SK-N-SH (cell line): ENCODE measurements at regions of chr2 and their contacts with region 1.

Region 1: DNA sequence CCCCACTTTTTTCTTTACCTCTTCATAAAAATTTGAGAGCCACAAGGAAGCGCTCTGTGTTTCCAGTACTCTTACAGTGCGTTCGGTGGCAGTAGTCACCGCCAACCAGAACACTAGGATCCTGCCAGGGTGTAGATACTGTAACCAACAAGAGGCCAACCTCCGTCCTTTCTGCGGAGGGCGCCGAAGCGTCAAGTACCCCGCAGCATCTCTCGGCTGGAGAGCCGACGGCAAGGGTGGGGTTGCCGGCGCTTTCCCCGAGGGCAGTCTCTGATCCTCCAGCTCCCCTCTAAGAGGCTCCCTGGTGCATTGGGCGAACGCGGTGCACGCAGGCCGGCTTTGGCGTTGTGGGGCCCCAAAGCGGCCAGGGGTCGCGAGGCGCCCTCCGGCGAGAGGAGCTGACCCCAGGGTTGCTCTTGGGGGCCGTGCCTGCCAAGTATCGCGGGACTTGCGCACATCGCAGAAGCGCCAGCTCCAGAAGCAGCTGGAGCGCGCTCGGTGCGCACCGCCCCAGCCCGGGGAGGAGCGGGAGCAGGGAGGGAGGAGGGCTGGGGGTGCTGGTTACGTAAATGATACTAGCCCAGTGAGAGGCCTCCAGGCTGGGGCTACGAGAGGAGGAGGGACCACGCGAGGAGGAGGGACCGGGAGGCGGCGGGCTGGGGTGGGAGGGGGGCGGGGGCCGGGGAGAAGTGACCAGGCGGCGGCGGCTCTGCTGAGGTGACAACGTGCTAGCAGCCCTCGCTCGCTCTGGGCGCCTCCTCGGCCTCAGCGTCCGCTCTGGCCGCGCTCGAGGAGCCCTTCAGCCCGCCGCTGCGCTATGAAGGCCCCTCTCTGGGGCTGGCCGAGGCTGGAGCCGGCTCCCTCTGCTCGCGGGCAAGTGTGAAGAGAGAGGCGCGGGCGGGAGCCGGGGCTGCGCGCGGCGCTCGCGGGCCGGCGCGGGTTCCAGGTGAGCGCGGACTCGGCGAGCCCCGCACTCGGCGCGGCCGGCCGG is at the start of gene GALNT13:
- DNase-seq: peak; percentile 92
- H3K4me3 ChIP-seq: peak within 1 kb of the TSS; percentile 12 to 57; a peak in 3 of 4 replicates
- H3K27ac ChIP-seq: peak within 1 kb of the TSS in 1 of 2 experiments; percentile 91; a peak in 2 of 4 replicates
- H3K4me1 ChIP-seq: peaks cover 0 to 6% of the 10 kb centered on the region in 2 experiments; a peak in 2 of 4 replicates
- H3K27me3 ChIP-seq: peaks cover 24% of the 10 kb centered on the region; the same call in 1 of the 2 replicates
- CTCF ChIP-seq: no peak
- EP300 ChIP-seq: 0 out of 4 replicates have a peak, but pooled peaks of 1 of the 2 experiments have one; percentile 3
- RAD21 ChIP-seq: peak; percentile 57
- polyA plus RNA-seq, gene GALNT13: 0.33 and 0.86 TPM in 2 replicates

Region 2: DNA sequence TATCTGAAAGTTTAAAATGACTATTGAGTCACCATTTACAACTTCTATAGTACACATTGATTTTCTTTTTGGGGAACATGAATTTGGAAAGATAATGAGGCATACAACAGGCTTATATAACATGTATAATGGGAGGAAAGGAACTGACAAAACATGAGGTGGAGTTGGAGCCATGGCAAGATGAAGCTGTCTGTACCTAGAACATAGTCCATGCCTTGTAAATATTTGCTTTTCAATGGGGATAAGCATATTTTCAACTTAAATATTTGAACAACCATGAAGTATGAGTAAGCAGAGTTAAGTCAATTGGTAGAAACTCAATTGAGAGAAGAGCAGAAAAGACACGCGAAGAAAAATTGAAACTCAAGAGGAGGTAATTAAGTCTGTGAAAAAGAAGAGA is 36.9 kb before region 1 on chr2:
- CTCF ChIA-PET with region 1: no interaction called
- POLR2A ChIA-PET with region 1: no interaction called
- DNase-seq: no peak
- H3K4me3 ChIP-seq: no peak overlapping the region
- H3K27ac ChIP-seq: no peak overlapping the region
- H3K4me1 ChIP-seq: no peaks in the 10 kb centered on the region
- H3K27me3 ChIP-seq: no peaks in the 10 kb centered on the region
- CTCF ChIP-seq: no peak
- EP300 ChIP-seq: no peak
- RAD21 ChIP-seq: no peak

Region 3: DNA sequence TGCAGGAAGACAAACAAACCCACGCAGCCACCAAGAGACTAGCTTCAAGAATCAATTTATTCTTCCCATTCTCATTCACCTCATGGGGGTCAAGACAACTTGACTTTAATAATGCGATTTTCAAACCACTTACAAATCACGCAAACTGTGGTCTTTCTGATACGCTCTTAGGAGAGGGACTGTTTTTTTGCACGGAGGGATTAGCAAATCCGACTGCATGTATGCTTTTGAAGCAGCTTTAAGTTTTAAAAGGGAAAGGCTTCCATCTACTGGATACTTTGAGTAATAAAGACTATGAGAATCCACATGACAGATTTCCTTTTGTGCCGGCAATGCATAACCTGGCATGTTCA is 504.0 kb after region 1 on chr2:
- CTCF ChIA-PET with region 1: interaction called, 32 read pairs
- POLR2A ChIA-PET with region 1: interaction called, 6 read pairs
- DNase-seq: peak; percentile 29
- H3K4me3 ChIP-seq: no peak overlapping the region
- H3K27ac ChIP-seq: no peak overlapping the region; a peak in 1 of 4 replicates
- H3K4me1 ChIP-seq: no peaks in the 10 kb centered on the region; a peak in 1 of 4 replicates
- H3K27me3 ChIP-seq: no peaks in the 10 kb centered on the region
- CTCF ChIP-seq: peak; percentile 61
- EP300 ChIP-seq: no peak
- RAD21 ChIP-seq: peak; percentile 84